Activated CD4-positive, alpha-beta memory T cell treated with anti-CD3 and anti-CD28 coated beads, Interleukin-2, amount 10 ng/mL, durations not matched to agents 7 days and 5 days (primary cell): ENCODE measurements at regions of chr9 and their contacts with region 1.

Region 1: DNA sequence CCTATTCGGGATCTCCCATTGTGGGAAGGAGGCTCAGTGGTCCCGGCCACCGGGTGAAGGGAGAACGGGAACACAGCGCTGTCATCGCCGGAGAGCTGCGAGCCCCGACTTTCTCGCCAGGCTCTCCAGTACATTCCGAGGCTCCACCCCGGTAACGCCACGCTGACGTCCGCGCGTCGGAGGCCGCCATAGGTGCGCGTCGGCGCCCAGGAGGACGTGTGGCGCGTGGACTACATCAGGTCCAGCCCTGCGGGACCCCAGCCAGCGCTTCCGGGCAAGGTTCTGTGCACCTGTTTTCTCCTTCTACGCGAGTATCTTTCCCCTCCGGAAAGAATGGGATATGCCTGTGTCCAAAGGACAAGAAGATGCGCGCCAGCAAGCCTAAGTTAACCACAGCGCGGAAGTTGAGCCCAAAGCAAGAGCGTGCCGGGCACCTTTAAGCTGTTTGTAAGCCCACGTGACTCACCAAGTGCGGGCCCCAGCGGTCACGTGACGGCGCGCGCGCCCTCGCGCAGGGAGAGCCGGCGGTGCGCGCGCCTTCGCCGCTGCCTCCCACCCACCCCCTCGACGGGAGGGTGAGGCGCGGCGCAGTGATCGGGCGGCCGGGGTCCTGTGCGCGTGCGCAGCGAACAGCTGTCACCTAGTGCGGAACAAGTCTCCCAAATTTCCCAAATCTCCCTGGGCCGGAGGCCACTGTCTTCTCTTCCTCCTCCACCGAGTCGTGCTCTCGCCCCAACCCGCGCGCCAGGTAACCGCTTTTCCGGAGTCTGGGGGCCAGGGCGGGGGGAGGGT is at the start of gene KDM4C:
- DNase-seq: peak; percentile 94
- H3K4me3 Mint-ChIP-seq: peak within 1 kb of the TSS; percentile 90
- H3K27ac Mint-ChIP-seq: peak within 1 kb of the TSS; percentile 100
- H3K4me1 Mint-ChIP-seq: peaks cover 27% of the 10 kb centered on the region
- H3K27me3 Mint-ChIP-seq: no peaks in the 10 kb centered on the region
- total RNA-seq, gene KDM4C: 49.4 to 50.0 TPM

Region 2: DNA sequence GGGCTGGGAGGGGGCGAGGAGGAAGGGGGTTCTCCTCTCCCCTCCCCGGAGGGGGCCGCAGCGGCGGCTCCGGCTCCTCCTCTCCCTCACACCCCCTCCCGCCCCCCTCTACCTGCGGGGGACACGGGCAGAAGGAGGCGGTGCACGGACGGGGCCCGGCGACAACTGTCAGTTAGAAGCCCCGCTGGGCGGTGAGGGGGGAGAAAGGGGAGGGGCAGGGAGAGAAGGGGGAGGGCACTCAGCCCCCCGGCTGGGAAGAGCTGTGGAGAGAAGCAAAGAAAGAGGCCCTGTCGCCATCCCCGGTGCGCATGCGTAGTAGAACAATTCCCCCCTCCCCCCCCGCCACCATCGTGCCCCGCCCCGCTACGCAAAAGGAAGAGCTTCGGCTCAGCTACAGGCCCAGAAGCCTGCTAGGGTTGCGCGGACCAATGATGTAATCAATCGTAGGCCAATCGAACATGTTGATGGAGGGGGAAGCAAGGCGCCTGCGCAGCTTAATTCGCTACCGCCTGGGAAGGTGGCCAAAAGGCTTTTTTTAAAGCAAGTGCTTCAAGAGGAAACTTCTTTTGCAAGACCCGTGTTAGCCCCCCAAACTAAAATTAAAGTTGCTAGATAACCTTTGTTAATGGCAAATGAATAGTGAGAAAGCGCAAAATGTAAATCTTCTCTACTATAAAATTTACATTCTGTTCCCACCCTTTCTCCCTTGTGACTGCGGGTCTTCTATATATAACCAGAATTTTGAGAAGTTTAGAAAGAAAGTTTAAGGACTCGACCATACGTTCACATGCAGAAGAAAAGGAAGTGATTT is 749.3 kb before region 1 on chr9:
- CTCF ChIA-PET with region 1: no interaction called
- POLR2A ChIA-PET with region 1: interaction called, 15 read pairs
- DNase-seq: peak; percentile 95
- H3K4me3 Mint-ChIP-seq: peak overlapping the region; percentile 74
- H3K27ac Mint-ChIP-seq: peak overlapping the region; percentile 78
- H3K4me1 Mint-ChIP-seq: peaks cover 73% of the 10 kb centered on the region
- H3K27me3 Mint-ChIP-seq: no peaks in the 10 kb centered on the region

Region 3: GRCh38 chr9:6681147-6681956 is 76.3 kb before region 1 on chr9:
- CTCF ChIA-PET with region 1: interaction called, 3 read pairs
- POLR2A ChIA-PET with region 1: interaction called, 124 read pairs
- DNase-seq: peak; percentile 95
- H3K4me3 Mint-ChIP-seq: peak overlapping the region; percentile 94
- H3K27ac Mint-ChIP-seq: peak overlapping the region; percentile 99
- H3K4me1 Mint-ChIP-seq: peaks cover 22% of the 10 kb centered on the region
- H3K27me3 Mint-ChIP-seq: no peaks in the 10 kb centered on the region

Region 4: GRCh38 chr9:6703898-6704639 is 53.6 kb before region 1 on chr9:
- CTCF ChIA-PET with region 1: no interaction called
- POLR2A ChIA-PET with region 1: interaction called, 57 read pairs
- DNase-seq: peak; percentile 79
- H3K4me3 Mint-ChIP-seq: peak overlapping the region; percentile 85
- H3K27ac Mint-ChIP-seq: peak overlapping the region; percentile 86
- H3K4me1 Mint-ChIP-seq: peaks cover 15% of the 10 kb centered on the region
- H3K27me3 Mint-ChIP-seq: no peaks in the 10 kb centered on the region

Region 5: DNA sequence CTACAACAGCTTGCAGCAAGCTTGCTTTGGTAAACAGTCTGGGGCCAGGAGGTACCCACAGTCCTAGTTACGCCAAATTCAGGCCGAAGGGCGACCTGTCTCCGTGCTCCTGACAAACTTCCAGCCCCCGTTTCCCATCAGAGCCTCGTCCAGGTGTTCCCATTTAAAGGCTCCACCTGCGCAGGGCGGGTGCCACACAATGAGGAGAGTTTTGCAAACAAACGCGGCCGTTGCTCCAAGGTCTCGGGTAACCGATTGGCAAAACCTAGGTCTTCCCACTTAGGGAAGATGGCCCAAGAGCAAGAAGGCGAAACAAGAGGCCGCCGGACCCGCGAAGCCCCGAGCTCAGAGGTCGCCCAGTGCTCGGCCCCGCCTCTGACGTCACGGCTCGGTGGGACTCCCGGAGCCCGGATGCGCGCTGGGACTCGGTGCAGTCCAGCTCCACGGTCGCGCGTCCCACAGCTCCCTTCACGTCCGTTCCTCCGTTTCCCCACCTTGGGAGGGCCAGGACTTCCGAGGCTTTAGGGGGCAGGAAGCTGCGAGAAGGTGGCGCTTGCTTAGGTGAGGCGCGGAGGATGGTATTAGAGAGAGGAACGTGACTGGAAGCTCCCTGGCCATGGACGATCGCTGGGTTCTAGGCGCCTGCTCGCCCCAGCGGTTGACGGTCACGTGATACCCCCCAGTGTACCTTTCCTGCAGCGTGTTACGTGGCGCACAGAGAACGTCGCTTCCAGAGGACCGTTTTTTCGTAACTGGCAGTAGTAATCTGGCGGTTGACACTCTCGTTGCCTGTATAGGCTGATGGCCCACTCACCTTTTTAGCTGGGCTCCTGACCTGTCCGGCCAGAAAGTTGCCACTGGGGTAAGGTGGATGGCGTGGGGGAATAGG is 41.7 kb before region 1 on chr9:
- CTCF ChIA-PET with region 1: interaction called, 4 read pairs
- POLR2A ChIA-PET with region 1: interaction called, 58 read pairs
- DNase-seq: peak; percentile 81
- H3K4me3 Mint-ChIP-seq: peak overlapping the region; percentile 85
- H3K27ac Mint-ChIP-seq: peak overlapping the region; percentile 79
- H3K4me1 Mint-ChIP-seq: peaks cover 13% of the 10 kb centered on the region
- H3K27me3 Mint-ChIP-seq: peaks cover 3% of the 10 kb centered on the region

Region 6: DNA sequence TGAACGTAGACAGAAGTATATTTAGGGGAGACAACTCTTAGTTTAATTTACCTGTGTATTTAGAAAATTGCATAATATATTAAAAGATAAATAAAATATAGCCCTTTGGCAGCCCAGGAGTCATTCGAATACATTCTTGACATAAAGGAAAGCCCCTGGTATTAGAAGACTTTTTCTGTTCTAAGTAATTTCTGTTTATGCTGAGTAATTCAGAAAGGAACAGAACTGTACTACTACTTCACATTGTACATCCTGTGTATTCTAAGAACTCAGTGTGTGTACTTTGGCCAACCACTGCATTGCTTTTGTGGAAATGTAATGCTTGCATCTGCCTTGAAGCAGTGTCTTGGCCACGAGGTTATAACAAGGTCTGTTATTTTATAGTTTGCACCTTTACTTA is 136.5 kb after region 1 on chr9:
- CTCF ChIA-PET with region 1: no interaction called
- POLR2A ChIA-PET with region 1: interaction called, 14 read pairs
- DNase-seq: peak; percentile 50
- H3K4me3 Mint-ChIP-seq: peak overlapping the region; percentile 14
- H3K27ac Mint-ChIP-seq: peak overlapping the region; percentile 69
- H3K4me1 Mint-ChIP-seq: peaks cover 37% of the 10 kb centered on the region
- H3K27me3 Mint-ChIP-seq: no peaks in the 10 kb centered on the region